CD4-positive, alpha-beta T cell (primary cell): ENCODE measurements at regions of chr1 and their contacts with region 1.

Region 1: GRCh38 chr1:182962554-182963115 is 9.7 kb upstream of the SHCBP1L start:
- DNase-seq: peak in 4 of 14 experiments; percentile 19 to 48 (median 24)
- ATAC-seq: peak; percentile 77
- H3K4me3 ChIP-seq: no peak overlapping the region
- H3K4me3 Mint-ChIP-seq: no peak overlapping the region
- H3K27ac ChIP-seq: no peak overlapping the region
- H3K27ac Mint-ChIP-seq: no peak overlapping the region
- H3K4me1 ChIP-seq: no peaks in the 10 kb centered on the region
- H3K4me1 Mint-ChIP-seq: no peaks in the 10 kb centered on the region
- H3K27me3 ChIP-seq: peaks cover 0 to 5% of the 10 kb centered on the region in 2 experiments
- H3K27me3 Mint-ChIP-seq: peaks cover 22% of the 10 kb centered on the region
- CTCF ChIP-seq: no peak

Region 2: DNA sequence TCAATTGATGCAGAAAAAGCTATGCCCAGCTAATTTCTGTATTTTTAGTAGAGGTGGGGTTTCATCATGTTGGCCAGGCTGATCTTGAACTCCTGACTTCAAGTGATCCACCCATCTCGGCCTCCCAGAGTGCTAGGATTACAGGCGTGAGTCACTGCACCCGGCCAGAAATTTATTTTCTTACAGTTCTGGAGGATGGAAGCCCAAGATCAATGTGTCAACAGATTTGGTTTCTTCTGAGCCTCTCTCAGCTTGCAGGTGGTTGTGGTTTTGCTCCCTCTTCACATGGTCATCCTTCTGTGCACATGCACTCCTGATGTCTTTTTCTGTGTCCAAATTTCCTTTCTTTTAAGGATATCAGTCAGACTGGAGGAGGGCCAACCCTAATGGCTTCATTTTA is 45.3 kb before region 1 on chr1:
- CTCF ChIA-PET with region 1: no interaction called
- POLR2A ChIA-PET with region 1: no interaction called
- intact Hi-C with region 1: no loop called
- DNase-seq: no peak
- ATAC-seq: no peak
- H3K4me3 ChIP-seq: no peak overlapping the region
- H3K4me3 Mint-ChIP-seq: no peak overlapping the region
- H3K27ac ChIP-seq: no peak overlapping the region
- H3K27ac Mint-ChIP-seq: no peak overlapping the region
- H3K4me1 ChIP-seq: no peaks in the 10 kb centered on the region
- H3K4me1 Mint-ChIP-seq: no peaks in the 10 kb centered on the region
- H3K27me3 ChIP-seq: peaks cover 12 to 22% of the 10 kb centered on the region in 2 experiments
- H3K27me3 Mint-ChIP-seq: peaks cover 59% of the 10 kb centered on the region
- CTCF ChIP-seq: no peak

Region 3: DNA sequence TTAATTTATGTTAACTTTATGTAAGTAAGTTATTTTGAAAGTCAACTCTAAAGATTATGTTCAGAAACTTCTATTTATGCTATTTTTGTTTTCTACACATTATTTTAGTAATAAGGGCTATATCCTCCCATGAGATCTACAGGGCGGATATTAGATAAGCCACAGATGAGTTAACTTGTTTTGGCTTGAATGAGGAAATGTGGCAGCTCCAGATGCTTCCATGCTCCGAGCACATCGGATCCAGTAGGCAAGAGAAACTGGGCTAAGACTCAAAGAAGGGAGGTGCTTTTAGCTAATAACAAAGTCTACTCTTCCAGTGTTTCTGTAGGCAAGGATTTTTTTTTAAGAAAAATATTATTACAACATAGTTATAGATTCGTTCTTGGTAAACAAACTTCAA is 40.6 kb after region 1 on chr1:
- CTCF ChIA-PET with region 1: no interaction called
- POLR2A ChIA-PET with region 1: no interaction called
- intact Hi-C with region 1: no loop called
- DNase-seq: no peak
- ATAC-seq: no peak
- H3K4me3 ChIP-seq: no peak overlapping the region
- H3K4me3 Mint-ChIP-seq: no peak overlapping the region
- H3K27ac ChIP-seq: no peak overlapping the region
- H3K27ac Mint-ChIP-seq: no peak overlapping the region
- H3K4me1 ChIP-seq: no peaks in the 10 kb centered on the region
- H3K4me1 Mint-ChIP-seq: no peaks in the 10 kb centered on the region
- H3K27me3 ChIP-seq: peaks cover 6 to 27% of the 10 kb centered on the region in 2 experiments
- H3K27me3 Mint-ChIP-seq: peaks cover 77% of the 10 kb centered on the region
- CTCF ChIP-seq: no peak

Region 4: DNA sequence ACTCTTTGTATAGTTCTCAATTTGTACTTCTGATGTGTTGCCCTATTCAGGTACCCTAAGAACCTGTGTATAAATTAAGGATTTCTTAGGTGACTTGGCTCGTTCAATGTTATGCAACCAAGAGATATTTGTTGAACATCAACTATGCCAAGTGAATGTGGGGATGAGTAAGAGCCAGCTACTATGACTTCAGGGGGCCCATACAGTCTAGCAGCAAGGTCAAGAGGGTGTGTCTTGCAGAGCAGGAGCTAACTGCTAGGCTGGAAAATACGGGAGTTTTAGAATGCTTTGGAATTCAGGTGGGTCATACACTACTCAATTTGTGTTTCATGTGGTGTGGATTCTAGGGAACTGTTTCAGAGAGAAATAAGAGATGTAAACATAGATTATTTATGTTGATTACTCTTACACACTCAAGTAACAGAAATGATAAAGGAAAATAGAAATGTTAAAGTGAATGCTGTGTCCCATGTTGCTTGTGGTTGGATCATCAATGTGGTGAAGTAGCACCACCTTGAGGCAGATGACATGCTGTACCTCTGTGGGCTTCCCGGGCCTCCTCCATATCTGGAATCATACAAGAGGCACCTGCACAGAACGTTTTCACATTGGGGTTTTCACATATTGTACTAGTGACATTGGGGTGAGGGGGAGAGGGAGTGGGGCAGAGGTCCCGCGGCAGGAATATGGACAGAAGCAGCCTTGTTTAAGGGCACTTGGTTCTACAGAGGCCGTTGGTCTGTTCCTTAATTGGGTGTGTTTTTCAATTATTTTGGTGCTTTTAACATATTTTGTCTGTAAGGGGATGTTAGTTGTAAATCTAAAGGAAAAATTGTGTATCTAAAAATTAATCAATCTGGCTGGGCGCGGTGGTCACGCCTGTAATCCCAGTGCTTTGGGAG is 660.5 kb after region 1 on chr1:
- CTCF ChIA-PET with region 1: no interaction called
- POLR2A ChIA-PET with region 1: no interaction called
- intact Hi-C with region 1: loop called in 1 of 2 experiments (anchors 2 kb)
- DNase-seq: peak; percentile 18 to 76 (median 36)
- ATAC-seq: peak; percentile 99
- H3K4me3 ChIP-seq: no peak overlapping the region
- H3K4me3 Mint-ChIP-seq: no peak overlapping the region
- H3K27ac ChIP-seq: no peak overlapping the region
- H3K27ac Mint-ChIP-seq: peak overlapping the region; percentile 60
- H3K4me1 ChIP-seq: no peaks in the 10 kb centered on the region
- H3K4me1 Mint-ChIP-seq: peaks cover 25% of the 10 kb centered on the region
- H3K27me3 ChIP-seq: no peaks in the 10 kb centered on the region
- H3K27me3 Mint-ChIP-seq: no peaks in the 10 kb centered on the region
- CTCF ChIP-seq: peak; percentile 64